ENCODE measurements at regions of chr20 and their contacts with region 1.

Region 1: GRCh38 chr20:33554914-33555420 is 65.1 kb downstream of the CBFA2T2 start:
- DNase-seq: no peak
- ATAC-seq: peak; percentile 99
- H3K4me3 Mint-ChIP-seq: peak overlapping the region; percentile 66
- H3K27ac Mint-ChIP-seq: peak overlapping the region; percentile 91
- H3K4me1 Mint-ChIP-seq: peaks cover 16% of the 10 kb centered on the region
- H3K27me3 Mint-ChIP-seq: no peaks in the 10 kb centered on the region

Region 2: GRCh38 chr20:33489495-33490022 is 65.4 kb before region 1 on chr20:
- POLR2A ChIA-PET with region 1: interaction called, 21 read pairs
- DNase-seq: peak; percentile 99
- ATAC-seq: peak; percentile 94
- H3K4me3 Mint-ChIP-seq: peak overlapping the region; percentile 89
- H3K27ac Mint-ChIP-seq: peak overlapping the region; percentile 91
- H3K4me1 Mint-ChIP-seq: peaks cover 5% of the 10 kb centered on the region
- H3K27me3 Mint-ChIP-seq: no peaks in the 10 kb centered on the region